Mammary epithelial cell (primary cell): ENCODE measurements at regions of chr10 and their contacts with region 1.

Region 1: DNA sequence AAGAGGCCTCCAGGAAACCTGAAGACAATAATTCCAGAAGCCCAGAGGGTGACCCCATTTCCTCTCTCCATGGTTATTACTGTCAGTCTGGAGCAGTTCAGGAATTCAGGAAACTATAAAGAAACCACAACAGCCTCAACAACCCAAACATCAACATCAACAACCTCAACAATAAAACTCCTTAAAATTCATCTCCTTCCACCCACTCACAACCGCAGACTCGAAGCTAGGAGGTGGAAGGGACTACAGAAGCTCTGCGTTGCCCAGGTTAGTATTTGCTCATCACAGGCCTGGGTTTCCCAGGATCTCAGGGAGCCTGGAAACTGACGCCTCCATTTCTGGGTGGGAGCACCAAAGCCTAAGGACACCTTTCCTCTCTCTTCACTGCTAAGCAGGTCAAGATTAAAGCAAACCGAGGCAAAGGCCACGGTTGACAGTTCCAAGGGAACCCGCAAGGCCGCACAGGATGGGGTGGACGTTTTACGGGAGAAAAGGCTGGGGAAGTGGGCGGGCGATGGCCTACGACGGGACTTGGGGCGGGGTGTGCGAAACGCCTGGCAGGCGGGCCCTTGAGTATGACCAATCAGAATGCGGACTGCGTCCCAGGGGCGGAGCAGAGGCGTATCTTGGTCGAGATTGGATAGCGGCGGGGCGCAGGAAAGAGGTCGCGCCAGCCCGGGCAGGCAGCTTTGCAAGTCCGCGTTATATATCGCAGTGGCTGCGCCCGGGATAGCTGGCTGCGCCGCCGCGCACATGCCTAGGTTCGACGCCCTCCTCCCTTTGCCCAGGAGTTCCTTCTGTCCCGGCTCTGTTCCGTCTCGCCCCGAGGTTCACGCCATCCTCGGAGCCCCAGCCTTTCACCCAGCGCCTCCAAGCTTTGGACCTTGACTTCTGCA is at the start of gene ELOVL3:
- DNase-seq: peak; percentile 87
- H3K4me3 ChIP-seq: peak within 1 kb of the TSS; percentile 16 to 36 (median 31)
- H3K27ac ChIP-seq: peak within 1 kb of the TSS; percentile 24
- H3K4me1 ChIP-seq: peaks cover 26% of the 10 kb centered on the region
- H3K27me3 ChIP-seq: no peaks in the 10 kb centered on the region
- CTCF ChIP-seq: no peak
- total RNA-seq, gene ELOVL3: 0.17 to 0.45 TPM

Region 2: GRCh38 chr10:102167861-102168260 is 58.0 kb before region 1 on chr10:
- CTCF ChIA-PET with region 1: interaction called, 4 read pairs
- dilution Hi-C with region 1: loop called (anchors 5 kb)
- in situ Hi-C with region 1: loop called in 1 of 2 experiments (anchors 5 kb)
- intact Hi-C with region 1: loop called (anchors 1 kb)
- DNase-seq: no peak
- H3K4me3 ChIP-seq: no peak overlapping the region
- H3K27ac ChIP-seq: no peak overlapping the region
- H3K4me1 ChIP-seq: no peaks in the 10 kb centered on the region
- H3K27me3 ChIP-seq: no peaks in the 10 kb centered on the region
- CTCF ChIP-seq: no peak

Region 3: DNA sequence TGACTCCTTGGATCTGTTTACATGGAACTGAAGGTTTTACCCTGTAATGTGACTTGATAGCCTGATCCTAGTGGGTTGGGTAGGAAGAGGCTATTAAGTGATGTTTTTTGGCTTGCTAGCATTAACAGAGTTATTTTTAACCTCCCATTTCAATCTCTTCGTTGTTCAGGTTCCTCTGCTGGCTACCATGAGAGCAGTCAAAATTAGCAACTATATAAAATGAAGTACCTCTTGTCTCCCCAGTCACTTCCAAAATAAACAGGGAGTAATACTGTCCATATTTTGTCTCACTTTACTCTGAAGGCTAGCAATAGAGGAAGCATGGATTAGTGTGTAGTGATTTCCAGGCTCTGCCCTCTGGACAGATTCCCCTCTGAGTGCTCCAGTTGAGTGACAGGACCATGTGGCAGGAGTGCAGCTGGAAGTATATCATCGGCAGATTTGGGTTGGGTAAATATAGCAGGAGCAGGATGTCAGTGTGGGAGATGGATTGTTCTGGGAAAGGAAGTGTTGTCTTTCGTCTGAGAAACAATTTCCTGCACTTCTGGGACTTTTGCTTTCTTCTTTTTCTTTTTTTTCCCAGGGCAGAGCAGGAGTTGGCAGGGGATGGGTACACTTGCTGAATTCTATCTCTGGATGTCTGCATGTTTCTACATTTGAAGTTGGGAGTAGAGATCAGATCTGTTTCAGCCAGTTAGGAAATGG is 54.7 kb after region 1 on chr10:
- CTCF ChIA-PET with region 1: no interaction called
- dilution Hi-C with region 1: loop called (anchors 10 kb)
- in situ Hi-C with region 1: no loop called
- intact Hi-C with region 1: no loop called
- DNase-seq: no peak
- H3K4me3 ChIP-seq: peak overlapping the region in 1 of 3 experiments; percentile 18
- H3K27ac ChIP-seq: peak overlapping the region; percentile 6
- H3K4me1 ChIP-seq: peaks cover 43% of the 10 kb centered on the region
- H3K27me3 ChIP-seq: no peaks in the 10 kb centered on the region
- CTCF ChIP-seq: no peak

Region 4: GRCh38 chr10:102358712-102359382 is 133.0 kb after region 1 on chr10:
- CTCF ChIA-PET with region 1: interaction called, 3 read pairs
- dilution Hi-C with region 1: loop called (anchors 5 kb)
- in situ Hi-C with region 1: loop called in 1 of 2 experiments (anchors 5 kb)
- intact Hi-C with region 1: no loop called
- DNase-seq: no peak
- H3K4me3 ChIP-seq: no peak overlapping the region
- H3K27ac ChIP-seq: no peak overlapping the region
- H3K4me1 ChIP-seq: no peaks in the 10 kb centered on the region
- H3K27me3 ChIP-seq: no peaks in the 10 kb centered on the region
- CTCF ChIP-seq: no peak

Region 5: DNA sequence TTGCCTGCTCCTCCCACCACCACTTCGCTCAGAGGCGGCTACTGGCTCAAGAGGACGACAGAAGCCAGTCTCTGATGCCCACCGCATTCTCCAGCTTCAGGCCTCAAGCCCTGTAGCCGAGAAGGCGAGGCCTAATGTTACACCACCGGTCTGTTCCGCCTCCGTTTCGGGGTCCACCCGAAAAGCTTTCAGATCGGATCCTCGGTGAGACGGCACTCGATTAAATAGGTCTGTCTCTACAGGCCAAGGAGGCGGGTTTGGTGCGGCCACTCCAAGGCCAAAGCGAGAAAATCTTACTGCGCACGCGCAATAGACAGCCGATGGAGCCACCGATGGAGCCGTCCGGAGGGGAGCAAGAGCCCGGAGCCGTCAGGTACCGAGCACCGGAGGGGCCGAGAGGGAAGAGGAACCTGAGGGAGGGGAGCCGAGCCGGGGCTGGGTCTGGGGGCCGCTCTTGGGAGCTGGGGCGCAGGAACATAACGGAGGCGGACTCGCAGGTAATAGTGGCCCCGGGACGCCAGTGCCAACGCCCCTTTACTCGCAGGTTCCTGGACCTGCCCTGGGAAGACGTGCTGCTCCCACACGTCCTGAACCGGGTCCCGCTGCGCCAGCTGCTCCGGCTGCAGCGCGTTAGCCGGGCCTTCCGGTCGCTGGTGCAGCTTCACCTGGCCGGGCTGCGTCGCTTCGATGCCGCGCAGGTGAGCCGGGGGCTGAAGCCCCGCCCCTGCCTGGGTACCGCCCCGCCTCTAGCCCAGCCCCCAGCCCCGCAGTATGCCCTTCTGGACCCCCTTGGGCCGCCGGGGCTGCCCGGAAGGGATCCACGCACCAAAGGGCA is 195.1 kb after region 1 on chr10 and contains the start of gene FBXL15:
- CTCF ChIA-PET with region 1: interaction called, 3 read pairs
- dilution Hi-C with region 1: no loop called
- in situ Hi-C with region 1: no loop called
- intact Hi-C with region 1: loop called (anchors 1 kb)
- DNase-seq: peak; percentile 96
- H3K4me3 ChIP-seq: peak within 1 kb of the TSS; percentile 72 to 88 (median 74)
- H3K27ac ChIP-seq: peak within 1 kb of the TSS; percentile 56
- H3K4me1 ChIP-seq: peaks cover 38% of the 10 kb centered on the region
- H3K27me3 ChIP-seq: no peaks in the 10 kb centered on the region
- CTCF ChIP-seq: no peak
- total RNA-seq, gene FBXL15: 5.0 to 7.0 TPM

Region 6: DNA sequence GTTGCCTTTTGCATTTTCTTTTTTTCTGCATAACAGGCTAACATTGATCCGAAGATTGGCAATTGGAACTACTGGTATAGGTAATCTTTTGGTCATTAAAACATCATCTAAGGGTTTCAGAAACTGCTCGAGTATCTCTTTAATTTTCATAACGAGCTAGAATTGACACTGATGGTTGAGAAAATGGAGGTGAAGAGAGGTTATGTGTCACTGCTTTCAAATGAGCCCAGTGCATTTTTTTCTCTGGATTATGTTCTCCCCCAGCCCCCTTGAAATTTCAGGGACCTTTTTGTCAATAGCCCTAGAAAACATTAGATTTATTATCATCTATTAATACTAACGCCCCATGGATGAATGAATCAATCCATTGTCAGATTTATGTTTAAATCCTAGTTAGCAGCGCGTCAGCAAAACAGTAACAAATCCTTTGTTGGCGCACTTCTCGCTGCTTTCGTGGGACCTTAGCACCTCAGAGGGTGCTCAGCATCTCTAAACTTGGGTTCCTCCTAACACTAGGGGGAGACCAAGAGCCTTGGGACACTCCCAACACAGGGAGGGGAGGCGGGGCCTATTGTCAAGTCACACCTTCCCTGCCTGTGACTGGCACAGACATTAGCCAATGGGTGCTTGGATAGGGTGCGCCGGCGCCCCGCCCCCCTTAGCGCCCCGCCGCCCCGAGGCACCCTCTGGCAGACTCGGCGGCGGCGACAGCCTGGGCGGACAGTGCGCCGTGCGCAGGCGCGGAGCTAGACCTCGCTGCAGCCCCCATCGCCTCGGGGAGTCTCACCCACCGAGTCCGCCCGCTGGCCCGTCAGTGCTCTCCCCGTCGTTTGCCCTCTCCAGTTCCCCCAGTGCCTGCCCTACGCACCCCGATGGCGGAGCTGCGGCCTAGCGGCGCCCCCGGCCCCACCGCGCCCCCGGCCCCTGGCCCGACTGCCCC is 277.7 kb after region 1 on chr10 and contains the start of gene SUFU:
- CTCF ChIA-PET with region 1: no interaction called
- dilution Hi-C with region 1: loop called (anchors 10 kb)
- in situ Hi-C with region 1: no loop called
- intact Hi-C with region 1: no loop called
- DNase-seq: peak; percentile 96
- H3K4me3 ChIP-seq: peak within 1 kb of the TSS; percentile 72 to 78 (median 78)
- H3K27ac ChIP-seq: peak within 1 kb of the TSS; percentile 40
- H3K4me1 ChIP-seq: peaks cover 12% of the 10 kb centered on the region
- H3K27me3 ChIP-seq: no peaks in the 10 kb centered on the region
- CTCF ChIP-seq: peak; percentile 89 to 97
- total RNA-seq, gene SUFU: 2.5 to 9.2 TPM

Region 7: DNA sequence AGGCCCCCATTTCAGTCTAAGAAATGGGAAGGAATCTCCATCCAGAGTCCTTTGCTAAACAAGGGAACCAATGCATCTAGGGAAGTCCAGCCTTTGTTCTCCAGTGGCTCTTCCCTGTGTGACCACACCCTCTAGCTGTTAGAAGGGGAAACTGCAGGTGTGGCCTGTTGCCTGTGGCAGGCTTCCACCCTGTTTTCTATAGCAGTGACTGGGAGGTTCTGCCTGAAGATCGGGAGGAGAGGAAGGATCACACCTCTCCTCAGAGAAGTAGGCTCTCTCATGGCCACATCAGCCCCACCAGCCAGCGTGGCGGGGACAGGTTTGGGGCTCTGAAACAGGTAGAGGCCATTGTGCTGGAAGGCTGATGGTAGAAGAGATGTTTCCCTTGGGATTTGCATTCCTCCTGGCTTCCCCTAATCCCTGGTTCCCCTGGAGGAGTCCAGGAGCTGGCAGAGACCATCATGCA is 370.6 kb after region 1 on chr10:
- CTCF ChIA-PET with region 1: no interaction called
- dilution Hi-C with region 1: loop called (anchors 10 kb)
- in situ Hi-C with region 1: loop called in 1 of 2 experiments (anchors 25 kb)
- intact Hi-C with region 1: no loop called
- DNase-seq: peak; percentile 57
- H3K4me3 ChIP-seq: no peak overlapping the region
- H3K27ac ChIP-seq: no peak overlapping the region
- H3K4me1 ChIP-seq: peaks cover 11% of the 10 kb centered on the region
- H3K27me3 ChIP-seq: no peaks in the 10 kb centered on the region
- CTCF ChIP-seq: peak; percentile 90